ENCODE measurements at regions of chr6 and their contacts with region 1.

Region 1: GRCh38 chr6:89597988-89598692 is 40.4 kb downstream of the LYRM2 start:
- DNase-seq: peak; percentile 75
- ATAC-seq: peak; percentile 49
- H3K4me3 ChIP-seq: 0 out of 2 replicates have a peak overlapping the region, but pooled peaks have one; percentile 30
- H3K27ac ChIP-seq: no peak overlapping the region
- H3K4me1 ChIP-seq: no peaks in the 10 kb centered on the region
- H3K27me3 ChIP-seq: no peaks in the 10 kb centered on the region
- CTCF ChIP-seq: peak; percentile 60

Region 2: DNA sequence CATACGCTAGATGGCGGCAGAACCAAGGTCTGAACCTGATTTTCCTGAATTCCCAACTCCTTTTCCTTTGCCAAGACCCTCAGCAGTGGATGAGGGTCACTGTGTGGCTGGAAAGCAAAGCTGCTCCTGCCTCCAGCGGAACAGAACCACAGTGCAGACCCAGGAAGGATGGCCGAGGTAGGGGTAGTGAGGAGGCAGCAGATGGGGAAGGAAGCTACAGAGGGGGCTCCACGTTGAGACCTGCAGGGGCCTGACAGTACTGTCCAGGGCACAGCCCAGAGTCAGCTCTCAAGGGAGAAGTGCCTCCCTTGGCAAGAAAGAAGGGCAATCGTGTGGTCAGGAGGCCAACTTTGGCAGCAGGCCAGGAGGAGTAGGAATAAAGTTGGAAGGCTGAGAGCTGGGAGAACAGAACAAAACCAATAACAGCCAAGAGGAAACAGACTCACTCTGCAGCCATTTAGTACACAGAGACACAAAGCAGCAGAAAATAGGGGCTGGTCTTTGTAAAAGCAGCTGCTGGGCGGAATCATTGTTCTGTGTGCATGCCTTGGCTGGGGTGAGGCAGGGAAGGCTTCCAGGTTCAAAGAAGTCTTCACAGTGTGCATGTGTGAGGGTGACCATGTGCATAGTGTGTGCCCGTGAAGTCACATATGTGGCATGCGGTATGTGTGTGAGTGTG is 286.1 kb before region 1 on chr6:
- CTCF ChIA-PET with region 1: no interaction called
- POLR2A ChIA-PET with region 1: no interaction called
- intact Hi-C with region 1: no loop called
- DNase-seq: peak; percentile 48
- ATAC-seq: peak; percentile 59
- H3K4me3 ChIP-seq: no peak overlapping the region
- H3K27ac ChIP-seq: no peak overlapping the region
- H3K4me1 ChIP-seq: peaks cover 28% of the 10 kb centered on the region
- H3K27me3 ChIP-seq: no peaks in the 10 kb centered on the region
- CTCF ChIP-seq: peak; percentile 37; the same call in 1 of the 2 replicates

Region 3: GRCh38 chr6:89371849-89372505 is 226.2 kb before region 1 on chr6:
- CTCF ChIA-PET with region 1: interaction called, 3 read pairs
- POLR2A ChIA-PET with region 1: no interaction called
- intact Hi-C with region 1: loop called (anchors 5 kb)
- DNase-seq: peak; percentile 73
- ATAC-seq: peak; percentile 84
- H3K4me3 ChIP-seq: no peak overlapping the region
- H3K27ac ChIP-seq: no peak overlapping the region
- H3K4me1 ChIP-seq: peaks cover 5% of the 10 kb centered on the region
- H3K27me3 ChIP-seq: no peaks in the 10 kb centered on the region
- CTCF ChIP-seq: peak; percentile 86

Region 4: GRCh38 chr6:89432875-89433251 is 165.3 kb before region 1 on chr6 and contains the start of gene ANKRD6:
- CTCF ChIA-PET with region 1: interaction called, 4 read pairs
- POLR2A ChIA-PET with region 1: no interaction called
- intact Hi-C with region 1: loop called (anchors 5 kb)
- DNase-seq: peak; percentile 77
- ATAC-seq: peak; percentile 92
- H3K4me3 ChIP-seq: peak within 1 kb of the TSS; percentile 71
- H3K27ac ChIP-seq: no peak within 1 kb of the TSS
- H3K4me1 ChIP-seq: no peaks in the 10 kb centered on the region
- H3K27me3 ChIP-seq: no peaks in the 10 kb centered on the region
- CTCF ChIP-seq: peak; percentile 59
- total RNA-seq, gene ANKRD6: 5.6 and 6.9 TPM in 2 replicates